ENCODE measurements at regions of chr1 and their contacts with region 1.

Region 1: DNA sequence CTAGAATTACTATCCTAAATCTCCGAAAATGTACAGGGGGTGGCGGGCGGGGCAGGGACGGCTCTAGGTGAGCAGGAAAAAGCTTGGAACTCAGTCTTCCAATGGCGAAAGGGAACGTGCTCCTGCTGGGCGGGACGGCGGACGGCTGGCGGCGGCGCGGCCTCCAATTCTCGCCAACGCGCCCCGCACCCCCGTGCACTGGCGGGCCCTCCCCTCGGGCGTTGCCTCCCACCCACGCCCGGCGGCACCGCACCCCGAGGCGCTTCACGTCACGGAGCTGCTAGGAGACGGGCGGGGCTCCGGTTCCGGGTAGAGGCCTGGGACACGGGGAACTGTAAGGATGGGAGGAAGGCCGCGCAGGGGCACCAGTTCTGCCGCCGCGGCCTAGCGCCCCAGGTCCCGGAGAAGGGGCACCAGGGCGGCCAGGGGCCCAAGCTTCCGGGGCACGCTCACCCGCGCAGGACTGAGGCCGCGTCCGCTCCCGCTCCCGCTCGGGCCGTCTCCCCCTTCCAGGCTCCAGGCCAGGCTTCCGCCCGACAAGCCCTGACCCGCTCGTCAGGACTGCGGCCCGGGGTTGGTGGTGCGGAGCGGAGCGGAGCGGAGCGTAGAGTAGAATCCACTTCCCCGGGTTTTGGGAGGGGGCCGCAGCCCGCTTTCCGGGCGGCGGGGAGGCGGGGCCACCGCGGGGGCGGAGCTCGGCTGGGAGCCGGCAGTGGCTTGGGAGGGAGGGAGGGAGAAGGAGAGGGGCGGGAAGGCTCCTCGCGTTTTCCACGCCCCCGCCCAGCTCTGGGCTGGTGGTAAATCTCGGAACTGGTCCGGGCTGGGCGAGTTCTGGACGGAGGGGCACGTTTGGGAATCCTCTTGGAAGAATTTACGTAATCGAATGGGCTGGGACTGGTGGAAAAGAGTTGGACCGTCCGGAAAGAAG is at the start of gene DDX59:
- DNase-seq: peak; percentile 87
- ATAC-seq: peak; percentile 84
- H3K4me3 Mint-ChIP-seq: peak within 1 kb of the TSS; percentile 97
- H3K27ac Mint-ChIP-seq: peak within 1 kb of the TSS; percentile 96
- H3K4me1 Mint-ChIP-seq: peaks cover 30% of the 10 kb centered on the region
- H3K27me3 Mint-ChIP-seq: no peaks in the 10 kb centered on the region
- CTCF ChIP-seq: no peak
- total RNA-seq, gene DDX59: 27.6 and 28.2 TPM in 2 replicates

Region 2: GRCh38 chr1:200628223-200628881 is 41.2 kb before region 1 on chr1:
- CTCF ChIA-PET with region 1: interaction called, 3 read pairs
- POLR2A ChIA-PET with region 1: interaction called, 20 read pairs
- intact Hi-C with region 1: loop called (anchors 2 kb)
- DNase-seq: peak; percentile 19
- ATAC-seq: peak; percentile 85
- H3K4me3 Mint-ChIP-seq: peak overlapping the region; percentile 51
- H3K27ac Mint-ChIP-seq: peak overlapping the region; percentile 54
- H3K4me1 Mint-ChIP-seq: peaks cover 30% of the 10 kb centered on the region
- H3K27me3 Mint-ChIP-seq: no peaks in the 10 kb centered on the region
- CTCF ChIP-seq: no peak

Region 3: DNA sequence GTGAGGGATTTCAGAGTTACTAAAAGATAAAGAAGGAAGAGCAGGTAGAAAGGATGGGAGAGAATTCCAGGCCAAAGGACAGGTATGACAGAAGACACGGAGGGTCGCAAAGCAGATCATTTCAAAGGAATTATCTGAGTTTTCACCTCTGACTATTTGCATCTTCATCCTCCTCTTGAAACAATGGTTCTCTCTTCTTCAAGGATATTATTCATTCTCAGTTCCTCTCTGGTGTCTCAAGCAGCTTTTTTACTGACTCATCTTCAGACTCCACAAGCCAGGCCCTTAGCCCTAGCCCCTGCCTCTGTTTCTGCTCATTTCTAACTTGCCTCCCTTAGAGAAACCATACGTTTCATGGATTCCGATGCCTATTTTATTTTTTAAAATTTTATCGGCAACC is 14.9 kb before region 1 on chr1:
- CTCF ChIA-PET with region 1: interaction called, 3 read pairs
- POLR2A ChIA-PET with region 1: interaction called, 11 read pairs
- intact Hi-C with region 1: no loop called
- DNase-seq: no peak
- ATAC-seq: peak; percentile 90
- H3K4me3 Mint-ChIP-seq: no peak overlapping the region
- H3K27ac Mint-ChIP-seq: peak overlapping the region; percentile 54
- H3K4me1 Mint-ChIP-seq: peaks cover 26% of the 10 kb centered on the region
- H3K27me3 Mint-ChIP-seq: no peaks in the 10 kb centered on the region
- CTCF ChIP-seq: no peak

Region 4: DNA sequence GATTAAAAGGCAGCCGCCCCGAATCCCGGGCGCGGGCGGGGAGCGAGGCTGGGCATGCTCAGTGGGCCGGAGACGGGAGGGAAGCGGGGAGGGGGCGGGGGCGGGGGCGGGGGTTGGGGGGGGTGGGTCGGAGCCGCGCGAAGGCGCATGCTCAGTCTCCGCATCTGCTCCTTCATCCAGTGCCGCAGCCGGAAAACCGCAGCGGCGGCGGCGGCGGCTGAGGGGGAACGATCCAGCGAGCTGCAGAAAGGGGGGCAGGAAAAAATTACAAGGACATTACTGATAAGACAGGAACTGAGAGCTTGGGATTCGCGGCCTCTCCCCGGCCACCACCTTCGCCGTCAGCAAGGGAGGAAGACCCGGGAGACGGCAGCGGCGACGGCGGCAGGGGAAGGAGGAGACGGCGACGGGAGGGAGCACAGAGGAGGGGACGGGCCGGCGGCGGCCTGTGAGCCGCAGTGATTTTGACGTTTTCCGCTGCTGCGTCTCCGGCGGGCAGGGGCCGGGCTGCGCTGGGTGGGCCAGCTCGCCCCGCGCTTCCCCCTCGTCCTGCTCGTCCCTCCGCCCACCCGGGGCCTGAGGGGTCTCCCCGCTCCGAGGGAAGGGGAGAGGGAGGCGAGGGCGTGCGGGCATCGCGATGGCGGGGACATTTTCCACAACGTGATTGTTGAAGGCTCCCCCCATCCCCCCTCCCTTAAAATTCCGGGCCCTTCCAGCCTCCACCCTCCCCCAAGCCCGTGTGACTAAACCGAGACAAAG is 69.3 kb after region 1 on chr1 and contains the start of gene CAMSAP2:
- CTCF ChIA-PET with region 1: no interaction called
- POLR2A ChIA-PET with region 1: interaction called, 14 read pairs
- intact Hi-C with region 1: loop called (anchors 2 kb)
- DNase-seq: peak; percentile 43
- ATAC-seq: peak; percentile 72
- H3K4me3 Mint-ChIP-seq: peak within 1 kb of the TSS; percentile 91
- H3K27ac Mint-ChIP-seq: peak within 1 kb of the TSS; percentile 76
- H3K4me1 Mint-ChIP-seq: peaks cover 17% of the 10 kb centered on the region
- H3K27me3 Mint-ChIP-seq: peaks cover 19% of the 10 kb centered on the region
- CTCF ChIP-seq: no peak
- total RNA-seq, gene CAMSAP2: 0.71 and 0.86 TPM in 2 replicates

Region 5: DNA sequence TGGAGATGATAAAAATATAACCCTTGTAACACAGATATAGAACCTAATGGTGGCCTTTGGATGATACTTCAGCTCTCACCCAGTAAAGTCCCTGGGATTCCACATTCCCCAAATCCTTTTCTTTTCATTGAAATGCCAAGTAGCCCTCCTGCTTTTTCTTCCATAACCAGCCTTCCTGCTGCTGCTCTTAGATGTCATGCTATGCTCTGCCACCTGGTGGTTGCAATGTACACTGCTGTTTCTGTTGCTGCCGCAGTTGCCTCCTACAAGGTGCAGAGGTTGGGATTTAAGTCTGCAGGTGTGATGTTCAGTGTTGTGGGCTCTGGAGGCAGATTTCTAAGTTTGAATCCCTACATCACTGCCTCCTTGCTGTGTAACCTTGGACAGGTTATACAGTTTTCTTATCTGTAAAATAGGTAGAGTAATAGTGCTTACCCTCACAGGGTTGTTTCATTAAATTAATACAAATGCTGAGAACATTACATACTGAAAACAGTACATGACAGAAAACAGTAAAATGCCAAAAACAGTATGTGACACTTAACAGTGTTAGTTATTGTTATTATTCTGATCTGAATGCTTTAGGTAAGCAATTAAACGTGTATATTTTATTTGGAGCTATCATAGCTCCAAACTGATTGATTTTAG is 133.4 kb after region 1 on chr1:
- CTCF ChIA-PET with region 1: interaction called, 3 read pairs
- POLR2A ChIA-PET with region 1: no interaction called
- intact Hi-C with region 1: loop called (anchors 2 kb)
- DNase-seq: peak; percentile 26
- ATAC-seq: peak; percentile 81
- H3K4me3 Mint-ChIP-seq: no peak overlapping the region
- H3K27ac Mint-ChIP-seq: no peak overlapping the region
- H3K4me1 Mint-ChIP-seq: no peaks in the 10 kb centered on the region
- H3K27me3 Mint-ChIP-seq: peaks cover 10% of the 10 kb centered on the region
- CTCF ChIP-seq: peak; percentile 61

Region 6: GRCh38 chr1:201016211-201016651 is 346.7 kb after region 1 on chr1:
- CTCF ChIA-PET with region 1: no interaction called
- POLR2A ChIA-PET with region 1: interaction called, 19 read pairs
- intact Hi-C with region 1: loop called (anchors 1 kb)
- DNase-seq: no peak
- ATAC-seq: no peak
- H3K4me3 Mint-ChIP-seq: no peak overlapping the region
- H3K27ac Mint-ChIP-seq: no peak overlapping the region
- H3K4me1 Mint-ChIP-seq: peaks cover 87% of the 10 kb centered on the region
- H3K27me3 Mint-ChIP-seq: no peaks in the 10 kb centered on the region
- CTCF ChIP-seq: no peak